Right ventricle myocardium superior (tissue), 1 donor: ENCODE measurements at regions of chr4 and their contacts with region 1.

Region 1: DNA sequence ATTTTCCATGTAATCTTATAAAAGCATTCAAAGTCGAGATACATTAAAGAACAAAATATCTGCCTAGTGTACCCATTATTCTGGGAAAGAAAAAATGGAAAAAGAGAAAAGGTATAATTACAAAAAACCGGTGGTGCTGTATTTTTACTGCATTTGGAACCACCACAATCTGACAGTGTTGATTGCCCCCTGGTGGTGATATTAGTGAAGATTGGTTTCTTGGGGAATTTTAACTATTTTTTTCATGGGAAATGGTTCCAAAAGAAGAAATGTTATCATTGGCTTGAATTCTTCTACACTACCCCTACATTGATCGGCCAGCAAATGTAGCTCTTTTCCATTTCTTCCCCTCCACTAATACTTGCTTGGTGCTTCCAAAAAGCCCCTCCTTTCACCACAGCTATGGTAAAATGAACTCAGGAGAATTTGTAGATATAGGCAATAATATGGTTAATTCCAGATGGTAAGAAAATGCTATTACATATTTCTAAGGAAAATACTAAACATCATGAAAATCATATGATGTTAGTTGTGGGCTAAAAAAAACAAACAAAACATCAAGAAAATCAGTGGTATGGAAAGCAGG is 50.0 kb downstream of the COX18 start:
- DNase-seq: no peak
- ATAC-seq: no peak

Region 2: DNA sequence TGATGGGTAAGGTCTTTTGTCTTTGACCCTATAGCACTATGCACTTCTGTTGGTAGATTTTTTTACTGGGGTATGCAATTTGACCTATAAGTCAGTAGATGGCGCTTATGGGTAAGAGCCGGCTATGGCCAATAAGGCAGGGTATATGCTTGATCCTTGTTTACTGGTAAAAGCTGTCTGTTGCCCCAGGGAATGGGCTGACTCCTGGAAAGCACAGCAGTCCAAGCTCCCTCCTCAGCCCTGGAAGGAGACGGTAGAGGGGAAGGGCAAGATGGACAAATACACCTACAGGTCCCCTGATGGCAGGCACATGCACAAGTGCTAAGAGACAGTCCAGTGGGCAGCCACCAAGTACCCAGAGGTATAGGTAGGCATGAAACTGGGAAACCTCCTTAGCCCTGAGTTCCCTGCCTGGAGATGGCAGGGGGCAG is 514.2 kb before region 1 on chr4:
- intact Hi-C with region 1: loop called (anchors 10 kb)
- DNase-seq: no peak
- ATAC-seq: peak; percentile 78

Region 3: GRCh38 chr4:72701987-72702819 is 317.4 kb before region 1 on chr4:
- intact Hi-C with region 1: loop called (anchors 10 kb)
- DNase-seq: no peak
- ATAC-seq: peak; percentile 56